ENCODE measurements at regions of chr17 and their contacts with region 1.

Region 1: GRCh38 chr17:68260051-68260762 is 12.4 kb downstream of the AMZ2 start:
- H3K4me3 Mint-ChIP-seq: no peak overlapping the region
- H3K27ac Mint-ChIP-seq: no peak overlapping the region
- H3K4me1 Mint-ChIP-seq: peaks cover 35% of the 10 kb centered on the region
- H3K27me3 Mint-ChIP-seq: peaks cover 14% of the 10 kb centered on the region

Region 2: DNA sequence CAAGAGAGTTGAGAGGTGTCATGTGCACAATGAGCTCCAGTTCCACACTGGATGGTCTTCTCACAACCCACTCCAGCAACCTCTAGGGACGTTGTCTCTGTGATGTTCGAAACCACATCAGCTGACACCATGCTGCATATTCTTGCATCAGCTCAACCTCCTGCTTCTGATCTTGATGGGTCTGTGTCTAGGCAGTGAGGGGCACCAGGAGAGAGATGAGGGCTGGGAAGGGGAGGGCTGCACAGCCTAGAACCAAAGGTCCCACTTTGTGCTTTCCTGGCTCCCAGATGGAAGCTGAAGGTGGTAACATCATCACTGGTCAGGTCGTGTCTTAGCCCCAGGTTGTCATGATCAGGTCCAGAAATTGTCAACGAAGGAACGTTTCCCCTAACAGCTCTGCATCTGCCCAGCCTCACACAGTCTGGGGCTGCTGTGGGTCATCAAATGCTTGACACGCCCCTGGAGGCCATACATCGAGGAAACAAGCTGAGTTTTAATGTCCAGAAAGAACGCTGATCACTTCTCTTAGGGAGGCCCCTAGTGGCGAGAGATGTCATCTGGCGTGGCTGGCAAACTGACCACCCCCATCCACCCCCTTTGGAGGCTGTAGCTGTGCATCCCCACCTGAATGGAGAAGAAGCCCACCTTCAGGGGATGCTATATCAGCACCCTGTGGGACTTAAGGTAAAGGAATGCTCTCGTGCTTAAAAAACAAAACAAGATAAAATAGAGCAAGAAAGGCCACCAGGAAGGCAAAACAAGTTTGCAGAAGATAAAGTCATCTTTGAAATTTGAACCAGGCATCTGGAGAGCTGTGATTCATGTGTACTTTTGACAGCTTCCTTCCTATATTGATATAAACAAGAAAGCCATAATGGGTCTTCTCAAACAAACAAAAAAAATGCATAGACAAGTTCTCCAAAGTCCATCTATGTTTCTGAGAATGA is 138.8 kb after region 1 on chr17:
- intact Hi-C with region 1: loop called (anchors 2 kb)
- H3K4me3 Mint-ChIP-seq: no peak overlapping the region
- H3K27ac Mint-ChIP-seq: peak overlapping the region; percentile 37
- H3K4me1 Mint-ChIP-seq: peaks cover 23% of the 10 kb centered on the region
- H3K27me3 Mint-ChIP-seq: no peaks in the 10 kb centered on the region

Region 3: GRCh38 chr17:68435876-68436842 is 176.0 kb after region 1 on chr17:
- intact Hi-C with region 1: loop called (anchors 1 kb)
- H3K4me3 Mint-ChIP-seq: no peak overlapping the region
- H3K27ac Mint-ChIP-seq: no peak overlapping the region
- H3K4me1 Mint-ChIP-seq: peaks cover 34% of the 10 kb centered on the region
- H3K27me3 Mint-ChIP-seq: no peaks in the 10 kb centered on the region